ENCODE measurements at regions of chr15 and their contacts with region 1.

Region 1: GRCh38 chr15:55318588-55319494 is at the starts of genes PIGB and PIGBOS1:
- DNase-seq: peak; percentile 82
- ATAC-seq: peak; percentile 97
- H3K4me3 ChIP-seq: peak within 1 kb of the TSS; percentile 66 to 91 (median 76)
- H3K27ac ChIP-seq: peak within 1 kb of the TSS; percentile 93
- H3K4me1 ChIP-seq: peaks cover 21% of the 10 kb centered on the region
- H3K27me3 ChIP-seq: no peaks in the 10 kb centered on the region
- CTCF ChIP-seq: peak; percentile 29
- EP300 ChIP-seq: peak in 1 of 2 experiments; percentile 46; a peak in 1 of 4 replicates
- POLR2A ChIP-seq: peak; percentile 83 to 85
- RAD21 ChIP-seq: peak; percentile 30; the same call in 1 of the 2 replicates
- total RNA-seq, gene PIGB: 12.4 and 14.5 TPM in 2 replicates
- total RNA-seq, gene PIGBOS1: 21.4 and 22.1 TPM in 2 replicates

Region 2: DNA sequence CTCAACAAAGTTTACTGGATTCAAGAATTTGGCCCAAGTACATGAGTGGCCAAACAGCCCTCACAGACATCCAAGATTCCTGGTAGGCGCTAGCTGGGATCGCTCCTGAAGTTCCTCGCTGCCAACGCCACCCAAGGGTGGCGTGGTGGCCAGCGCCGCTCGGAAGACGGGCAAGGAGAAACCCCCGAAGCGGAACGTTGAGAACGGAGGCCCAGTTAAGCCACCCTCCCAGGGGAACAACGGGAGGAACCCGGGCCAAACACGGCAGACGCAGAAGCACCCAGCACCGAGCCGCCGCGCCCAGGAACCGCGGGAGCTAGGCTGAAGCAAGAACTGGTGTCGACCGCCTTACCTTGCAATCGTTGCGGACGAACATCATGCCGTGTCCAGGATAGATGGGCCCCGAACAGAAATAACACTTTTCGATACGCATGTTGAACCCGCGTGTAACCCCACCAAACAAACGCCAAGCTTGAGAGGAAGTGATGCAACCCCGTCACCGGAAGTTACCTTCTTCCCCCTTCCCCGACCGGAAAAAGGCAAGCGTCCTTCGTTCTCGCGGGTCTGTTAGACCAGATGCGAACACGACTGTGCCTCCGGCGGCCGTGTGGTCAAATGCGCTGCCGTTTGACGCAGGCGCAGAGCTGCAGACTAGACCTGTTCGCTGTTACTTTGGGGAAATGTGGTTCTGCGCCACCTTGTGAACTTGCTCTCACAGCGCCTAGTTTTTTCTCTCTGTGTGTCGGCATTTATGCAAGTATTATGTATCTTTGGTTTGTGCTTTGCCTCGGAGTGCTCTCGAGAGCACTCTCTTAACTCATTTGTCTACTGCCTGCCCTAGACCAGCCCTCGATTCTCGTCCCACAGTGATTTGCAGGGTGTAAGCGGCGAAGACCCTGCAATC is 122.1 kb before region 1 on chr15 and contains the start of gene RSL24D1:
- CTCF ChIA-PET with region 1: no interaction called
- POLR2A ChIA-PET with region 1: interaction called, 11 read pairs
- in situ Hi-C with region 1: no loop called
- intact Hi-C with region 1: no loop called
- DNase-seq: peak; percentile 98
- ATAC-seq: peak; percentile 99
- H3K4me3 ChIP-seq: peak within 1 kb of the TSS; percentile 66 to 91 (median 85)
- H3K27ac ChIP-seq: peak within 1 kb of the TSS; percentile 89
- H3K4me1 ChIP-seq: peaks cover 36% of the 10 kb centered on the region
- H3K27me3 ChIP-seq: no peaks in the 10 kb centered on the region; a peak in 1 of 5 replicates
- CTCF ChIP-seq: peak; percentile 68
- EP300 ChIP-seq: peak in 1 of 2 experiments; percentile 26; a peak in 1 of 4 replicates
- POLR2A ChIP-seq: peak; percentile 86 to 94
- RAD21 ChIP-seq: no peak
- total RNA-seq, gene RSL24D1: 100.0 and 153 TPM in 2 replicates

Region 3: GRCh38 chr15:55366981-55367380 is 48.1 kb after region 1 on chr15:
- CTCF ChIA-PET with region 1: no interaction called
- POLR2A ChIA-PET with region 1: no interaction called
- in situ Hi-C with region 1: no loop called
- intact Hi-C with region 1: no loop called
- DNase-seq: no peak
- ATAC-seq: no peak
- H3K4me3 ChIP-seq: no peak overlapping the region
- H3K27ac ChIP-seq: no peak overlapping the region
- H3K4me1 ChIP-seq: peaks cover 7% of the 10 kb centered on the region
- H3K27me3 ChIP-seq: no peaks in the 10 kb centered on the region
- CTCF ChIP-seq: no peak
- EP300 ChIP-seq: no peak
- POLR2A ChIP-seq: no peak
- RAD21 ChIP-seq: no peak

Region 4: GRCh38 chr15:55407949-55408791 is 89.3 kb after region 1 on chr15 and contains the starts of genes CCPG1 and PIERCE2:
- CTCF ChIA-PET with region 1: no interaction called
- POLR2A ChIA-PET with region 1: interaction called, 30 read pairs
- in situ Hi-C with region 1: no loop called
- intact Hi-C with region 1: loop called (anchors 5 kb)
- DNase-seq: peak; percentile 87
- ATAC-seq: peak; percentile 93
- H3K4me3 ChIP-seq: peak within 1 kb of the TSS; percentile 70 to 86 (median 76)
- H3K27ac ChIP-seq: peak within 1 kb of the TSS; percentile 89
- H3K4me1 ChIP-seq: peaks cover 37% of the 10 kb centered on the region
- H3K27me3 ChIP-seq: no peaks in the 10 kb centered on the region
- CTCF ChIP-seq: peak; percentile 75
- EP300 ChIP-seq: no peak; a peak in 1 of 4 replicates
- POLR2A ChIP-seq: peak; percentile 66 to 72
- RAD21 ChIP-seq: peak; percentile 74
- total RNA-seq, gene CCPG1: 15.9 and 19.5 TPM in 2 replicates
- total RNA-seq, gene PIERCE2: not detected in 2 replicates

Region 5: GRCh38 chr15:55434989-55435825 is 116.4 kb after region 1 on chr15:
- CTCF ChIA-PET with region 1: interaction called, 3 read pairs
- POLR2A ChIA-PET with region 1: interaction called, 3 read pairs
- in situ Hi-C with region 1: no loop called
- intact Hi-C with region 1: loop called (anchors 5 kb)
- DNase-seq: peak; percentile 54
- ATAC-seq: peak; percentile 92
- H3K4me3 ChIP-seq: no peak overlapping the region
- H3K27ac ChIP-seq: no peak overlapping the region
- H3K4me1 ChIP-seq: no peaks in the 10 kb centered on the region
- H3K27me3 ChIP-seq: no peaks in the 10 kb centered on the region
- CTCF ChIP-seq: peak; percentile 70
- EP300 ChIP-seq: no peak
- POLR2A ChIP-seq: no peak
- RAD21 ChIP-seq: peak; percentile 46; the same call in 1 of the 2 replicates

Measured in HepG2 (cell line).